ENCODE measurements at regions of chr2 and their contacts with region 1.

Region 1: DNA sequence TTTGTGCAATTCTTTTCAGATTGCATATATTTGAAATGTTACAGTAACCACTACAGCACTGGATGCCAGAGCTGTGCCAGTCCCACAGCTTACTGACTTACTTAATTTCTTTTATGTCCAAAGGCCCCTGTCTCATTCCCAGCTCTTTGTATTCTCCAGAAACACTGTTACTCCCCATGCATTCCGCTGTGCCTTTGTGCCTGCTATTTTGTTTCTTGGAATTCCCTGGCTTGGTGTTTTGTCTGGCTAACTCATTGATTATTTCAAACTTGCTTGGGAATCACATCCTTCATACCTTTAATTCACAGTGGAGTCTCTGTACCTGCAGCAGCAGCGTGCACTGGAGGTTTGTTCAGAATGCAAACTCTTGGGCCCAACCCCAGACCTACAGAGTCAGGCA is 601.9 kb upstream of the DDX18 start:
- DNase-seq: no peak
- ATAC-seq: no peak

Region 2: GRCh38 chr2:115848192-115848591 is 1364.4 kb before region 1 on chr2:
- intact Hi-C with region 1: no loop called
- DNase-seq: no peak
- ATAC-seq: no peak

Region 3: GRCh38 chr2:117257362-117257761 is 44.8 kb after region 1 on chr2:
- intact Hi-C with region 1: loop called (anchors 2 kb)
- DNase-seq: no peak
- ATAC-seq: no peak

Region 4: DNA sequence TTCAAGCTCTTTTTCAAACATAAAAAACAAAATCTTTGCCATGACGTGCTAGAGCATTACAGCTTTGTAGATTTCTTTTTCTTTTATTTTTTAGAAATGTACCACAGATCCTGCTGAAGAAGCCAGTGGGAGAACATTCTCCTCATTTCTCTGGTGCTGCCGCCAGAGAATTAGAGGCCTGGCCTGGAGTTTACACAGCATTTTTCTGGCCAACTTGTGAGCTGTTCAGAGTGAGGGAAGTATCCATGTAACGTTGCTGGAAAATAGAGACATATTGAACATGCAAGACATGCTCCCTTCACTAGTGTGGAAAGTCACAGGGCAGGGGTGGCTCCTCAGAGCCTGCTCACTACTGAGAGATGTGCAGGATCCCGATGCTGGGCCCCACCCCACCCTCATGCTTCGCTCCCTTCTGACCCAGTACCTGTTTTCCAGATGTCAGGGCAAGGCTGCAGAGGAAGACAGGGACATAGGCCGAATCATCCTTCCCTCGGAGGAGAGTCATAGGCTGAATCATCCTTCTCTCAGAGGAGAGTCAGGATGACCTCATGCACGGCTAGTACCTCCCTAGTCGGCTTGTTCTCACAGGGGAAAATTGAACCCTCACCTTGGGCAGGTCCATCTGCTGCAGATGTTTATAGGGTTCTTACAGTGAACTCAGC is 1174.2 kb after region 1 on chr2:
- intact Hi-C with region 1: no loop called
- DNase-seq: no peak
- ATAC-seq: no peak

Measured in sciatic nerve (tissue), 2 donors.